Activated T-helper 1 cell treated with anti-CD3 and anti-CD28 coated beads, Interleukin-12 subunit alpha, Interleukin-12 subunit beta, Interleukin-2, Interleukin-4 antibody, amounts not matched to agents 30 ng/mL and 10 ng/mL and 1 ng/mL, durations not matched to agents 14 hours and 24 hours and 36 hours (primary cell): ENCODE measurements at regions of chr4 and their contacts with region 1.

Region 1: GRCh38 chr4:177393236-177393635 is 49.0 kb downstream of the AGA start:
- DNase-seq: peak; percentile 17
- H3K4me3 Mint-ChIP-seq: no peak overlapping the region
- H3K27ac Mint-ChIP-seq: no peak overlapping the region
- H3K4me1 Mint-ChIP-seq: peaks cover 24% of the 10 kb centered on the region
- H3K27me3 Mint-ChIP-seq: peaks cover 4% of the 10 kb centered on the region

Region 2: DNA sequence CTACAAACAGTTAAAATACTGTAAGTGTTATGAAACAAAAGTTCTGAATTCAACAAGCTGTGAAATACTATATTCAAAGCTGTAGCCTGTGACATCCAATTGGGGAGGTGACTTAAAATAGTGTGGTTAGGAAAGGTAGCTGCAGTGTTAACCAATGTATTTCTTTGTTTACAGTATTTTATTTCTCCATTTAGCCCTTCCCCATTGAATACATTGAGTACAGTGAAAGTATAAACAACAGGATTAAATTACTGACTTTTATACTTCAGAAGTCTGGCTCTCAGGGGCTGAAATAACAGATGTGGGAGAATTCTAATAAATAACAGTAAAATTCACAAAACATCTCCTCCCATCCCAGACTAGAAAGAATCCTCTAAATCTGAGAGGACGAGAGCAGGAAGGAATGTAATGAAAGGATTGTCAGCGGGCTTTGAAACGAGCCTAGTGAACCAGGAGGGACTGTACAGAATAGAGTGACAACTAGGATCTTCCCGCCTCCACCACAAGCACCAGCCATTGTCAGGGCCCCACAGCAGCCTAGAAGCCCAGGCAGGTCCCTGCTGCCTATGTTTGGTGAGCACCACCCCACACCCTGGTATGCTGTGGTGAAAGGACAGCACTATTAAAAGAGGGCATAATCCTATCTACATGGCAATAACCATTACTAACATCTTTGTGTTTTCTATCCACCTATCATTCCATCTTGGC is 999.8 kb before region 1 on chr4:
- intact Hi-C with region 1: no loop called
- DNase-seq: no peak
- H3K4me3 Mint-ChIP-seq: no peak overlapping the region
- H3K27ac Mint-ChIP-seq: no peak overlapping the region
- H3K4me1 Mint-ChIP-seq: no peaks in the 10 kb centered on the region
- H3K27me3 Mint-ChIP-seq: no peaks in the 10 kb centered on the region

Region 3: DNA sequence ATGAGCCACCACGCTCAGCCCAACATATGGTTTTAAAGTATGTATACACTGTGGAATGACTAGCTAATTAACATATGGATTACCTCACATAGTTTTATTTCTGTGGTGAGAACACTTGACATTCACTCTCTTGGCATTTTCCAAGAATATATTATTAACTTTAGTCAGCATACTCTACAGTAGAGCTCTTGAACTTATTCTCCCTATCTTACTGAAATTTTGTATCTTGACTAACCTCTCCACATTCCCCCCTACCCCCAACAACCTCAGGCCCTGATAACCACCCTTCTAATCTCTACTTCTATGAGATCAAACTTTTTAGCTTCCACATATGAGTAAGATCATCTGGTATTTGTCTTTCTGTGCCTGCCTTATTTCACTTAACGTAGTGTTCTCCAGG is 87.6 kb after region 1 on chr4:
- intact Hi-C with region 1: no loop called
- DNase-seq: no peak
- H3K4me3 Mint-ChIP-seq: no peak overlapping the region
- H3K27ac Mint-ChIP-seq: no peak overlapping the region
- H3K4me1 Mint-ChIP-seq: peaks cover 20% of the 10 kb centered on the region
- H3K27me3 Mint-ChIP-seq: no peaks in the 10 kb centered on the region

Region 4: DNA sequence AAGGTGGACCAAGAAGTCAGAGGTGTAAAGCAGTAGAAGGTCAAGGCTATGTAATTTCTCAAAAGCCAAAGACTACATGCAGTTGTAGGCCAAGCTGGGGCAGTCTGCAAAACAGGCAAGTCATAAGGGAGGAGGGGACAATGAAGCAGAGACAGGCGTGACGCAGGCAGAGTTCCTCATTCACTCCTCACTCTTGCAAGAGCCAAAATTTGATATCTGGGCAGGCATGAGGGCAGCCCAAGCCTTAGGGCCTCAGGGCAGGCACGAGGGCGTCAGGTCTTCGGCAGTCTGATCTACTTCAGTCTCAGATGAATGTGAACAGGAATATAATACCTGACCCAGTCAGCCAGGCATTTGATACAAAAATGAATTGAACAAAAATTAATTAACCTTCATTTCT is 135.4 kb after region 1 on chr4:
- intact Hi-C with region 1: no loop called
- DNase-seq: no peak
- H3K4me3 Mint-ChIP-seq: no peak overlapping the region
- H3K27ac Mint-ChIP-seq: no peak overlapping the region
- H3K4me1 Mint-ChIP-seq: no peaks in the 10 kb centered on the region
- H3K27me3 Mint-ChIP-seq: no peaks in the 10 kb centered on the region

Region 5: DNA sequence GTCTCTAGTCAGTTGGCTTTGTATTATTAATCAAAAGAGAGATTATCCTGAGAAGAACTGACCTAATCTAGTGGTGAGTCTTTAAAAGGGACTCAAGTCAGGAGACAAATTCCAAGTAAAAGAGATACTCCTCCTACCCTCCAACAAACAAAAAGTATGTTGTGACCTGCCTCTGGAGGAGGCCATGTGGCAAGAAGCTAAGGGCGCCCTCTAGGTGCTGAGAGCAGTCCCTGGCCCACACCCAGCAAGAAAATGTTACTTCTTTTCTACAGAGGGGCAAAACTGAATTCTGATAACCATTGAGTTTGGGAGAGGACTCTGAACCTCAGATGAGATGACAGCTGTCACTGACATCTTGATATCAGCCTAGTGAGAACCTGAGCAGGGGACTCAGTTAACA is 1002.6 kb after region 1 on chr4:
- intact Hi-C with region 1: loop called (anchors 5 kb)
- DNase-seq: no peak
- H3K4me3 Mint-ChIP-seq: no peak overlapping the region
- H3K27ac Mint-ChIP-seq: no peak overlapping the region
- H3K4me1 Mint-ChIP-seq: no peaks in the 10 kb centered on the region
- H3K27me3 Mint-ChIP-seq: no peaks in the 10 kb centered on the region